Activated naive CD4-positive, alpha-beta T cell treated with anti-CD3 and anti-CD28 coated beads for 36 hours (primary cell): ENCODE measurements at regions of chr10 and their contacts with region 1.

Region 1: GRCh38 chr10:3095373-3096139 is 28.2 kb downstream of the PFKP start:
- DNase-seq: peak; percentile 79
- H3K4me3 Mint-ChIP-seq: peak overlapping the region; percentile 27
- H3K27ac Mint-ChIP-seq: peak overlapping the region; percentile 81
- H3K4me1 Mint-ChIP-seq: peaks cover 56% of the 10 kb centered on the region
- H3K27me3 Mint-ChIP-seq: no peaks in the 10 kb centered on the region

Region 2: GRCh38 chr10:2575460-2575859 is 520.1 kb before region 1 on chr10:
- CTCF ChIA-PET with region 1: no interaction called
- intact Hi-C with region 1: no loop called
- DNase-seq: no peak
- H3K4me3 Mint-ChIP-seq: no peak overlapping the region
- H3K27ac Mint-ChIP-seq: no peak overlapping the region
- H3K4me1 Mint-ChIP-seq: no peaks in the 10 kb centered on the region
- H3K27me3 Mint-ChIP-seq: peaks cover 12% of the 10 kb centered on the region

Region 3: DNA sequence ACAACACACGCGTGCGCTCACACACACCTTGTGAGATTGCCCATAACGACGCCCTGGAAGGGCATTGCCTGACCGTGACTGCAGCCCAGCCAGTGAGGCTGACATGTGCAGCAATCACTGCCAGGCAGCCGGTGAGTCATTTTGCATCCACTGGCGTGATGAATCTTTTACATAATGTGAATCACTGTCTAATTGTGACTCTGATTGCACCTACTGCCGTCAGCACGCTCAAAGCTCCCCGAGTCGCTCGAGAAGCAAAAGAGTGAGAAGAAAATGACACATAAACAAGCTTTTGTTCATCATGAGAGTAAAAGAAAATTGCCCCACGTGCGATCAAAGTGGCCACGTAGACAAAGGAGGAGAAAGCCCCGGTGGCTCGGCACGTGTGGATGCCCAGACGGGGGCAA is 145.6 kb before region 1 on chr10:
- CTCF ChIA-PET with region 1: no interaction called
- intact Hi-C with region 1: loop called (anchors 1 kb)
- DNase-seq: peak; percentile 69
- H3K4me3 Mint-ChIP-seq: no peak overlapping the region
- H3K27ac Mint-ChIP-seq: peak overlapping the region; percentile 50
- H3K4me1 Mint-ChIP-seq: peaks cover 31% of the 10 kb centered on the region
- H3K27me3 Mint-ChIP-seq: peaks cover 35% of the 10 kb centered on the region

Region 4: GRCh38 chr10:3068201-3068967 is 27.2 kb before region 1 on chr10:
- CTCF ChIA-PET with region 1: no interaction called
- intact Hi-C with region 1: loop called (anchors 1 kb)
- DNase-seq: peak; percentile 78
- H3K4me3 Mint-ChIP-seq: peak overlapping the region; percentile 86
- H3K27ac Mint-ChIP-seq: peak overlapping the region; percentile 82
- H3K4me1 Mint-ChIP-seq: peaks cover 41% of the 10 kb centered on the region
- H3K27me3 Mint-ChIP-seq: peaks cover 9% of the 10 kb centered on the region

Region 5: GRCh38 chr10:3172446-3173170 is 77.1 kb after region 1 on chr10 and contains the start of gene PITRM1:
- CTCF ChIA-PET with region 1: no interaction called
- intact Hi-C with region 1: loop called (anchors 1 kb)
- DNase-seq: peak; percentile 99
- H3K4me3 Mint-ChIP-seq: peak within 1 kb of the TSS; percentile 87
- H3K27ac Mint-ChIP-seq: peak within 1 kb of the TSS; percentile 89
- H3K4me1 Mint-ChIP-seq: peaks cover 23% of the 10 kb centered on the region
- H3K27me3 Mint-ChIP-seq: no peaks in the 10 kb centered on the region
- total RNA-seq, gene PITRM1: 65.6 to 74.5 TPM

Region 6: GRCh38 chr10:3570855-3571266 is 475.3 kb after region 1 on chr10:
- CTCF ChIA-PET with region 1: no interaction called
- intact Hi-C with region 1: no loop called
- DNase-seq: no peak
- H3K4me3 Mint-ChIP-seq: no peak overlapping the region
- H3K27ac Mint-ChIP-seq: no peak overlapping the region
- H3K4me1 Mint-ChIP-seq: peaks cover 8% of the 10 kb centered on the region
- H3K27me3 Mint-ChIP-seq: no peaks in the 10 kb centered on the region